CD4-positive, alpha-beta memory T cell (primary cell): ENCODE measurements at regions of chr1 and their contacts with region 1.

Region 1: GRCh38 chr1:110619412-110620249 is 13.5 kb upstream of the KCNA2 start:
- DNase-seq: peak; percentile 86 to 92 (median 91)
- H3K4me3 ChIP-seq: peak overlapping the region; percentile 60 to 77
- H3K4me3 Mint-ChIP-seq: peak overlapping the region; percentile 86 to 97 (median 91)
- H3K27ac ChIP-seq: peak overlapping the region; percentile 50
- H3K27ac Mint-ChIP-seq: peak overlapping the region; percentile 90 to 99 (median 97)
- H3K4me1 ChIP-seq: peaks cover 33% of the 10 kb centered on the region
- H3K4me1 Mint-ChIP-seq: peaks cover 32 to 50% (median 38%) of the 10 kb centered on the region in 4 donors
- H3K27me3 ChIP-seq: no peaks in the 10 kb centered on the region
- H3K27me3 Mint-ChIP-seq: no peaks in the 10 kb centered on the region

Region 2: DNA sequence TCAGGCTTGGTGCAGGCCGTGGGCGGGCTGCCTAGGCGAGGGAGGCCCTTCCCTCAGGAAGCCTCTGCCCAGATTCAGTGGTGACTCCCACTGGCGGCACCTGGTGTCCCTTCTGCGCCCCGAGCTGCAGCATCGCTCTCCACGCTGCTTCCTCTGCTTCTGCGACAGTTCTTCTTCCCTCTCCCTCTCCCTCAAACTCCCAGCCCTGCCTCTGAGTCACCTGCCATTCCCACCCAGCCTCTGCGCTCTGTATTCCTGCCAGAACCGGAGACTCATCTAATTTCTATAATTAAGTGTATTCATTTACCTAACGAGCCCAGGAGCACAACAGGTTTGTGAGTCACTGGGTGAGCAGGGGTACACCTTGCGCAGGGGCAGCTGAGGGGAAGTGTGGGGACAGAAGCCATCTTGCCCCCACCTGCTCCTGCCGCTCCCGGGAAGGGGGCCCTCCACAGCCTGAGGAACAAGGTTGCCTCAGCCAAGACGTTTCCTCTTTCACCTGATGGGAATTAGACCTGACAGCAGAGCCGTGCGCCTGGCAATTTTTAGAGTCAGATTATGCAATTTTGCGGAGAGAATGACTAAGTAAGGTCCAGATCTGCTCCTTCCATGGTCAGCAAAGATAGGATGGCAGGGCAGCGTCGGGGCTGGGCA is 390.2 kb before region 1 on chr1:
- CTCF ChIA-PET with region 1: no interaction called
- POLR2A ChIA-PET with region 1: no interaction called
- intact Hi-C with region 1: no loop called
- DNase-seq: no peak
- H3K4me3 ChIP-seq: no peak overlapping the region
- H3K4me3 Mint-ChIP-seq: no peak overlapping the region
- H3K27ac ChIP-seq: no peak overlapping the region
- H3K27ac Mint-ChIP-seq: peak overlapping the region in 1 of 7 donors; percentile 57
- H3K4me1 ChIP-seq: no peaks in the 10 kb centered on the region
- H3K4me1 Mint-ChIP-seq: peaks cover 0 to 3% (median 0%) of the 10 kb centered on the region in 4 donors
- H3K27me3 ChIP-seq: no peaks in the 10 kb centered on the region
- H3K27me3 Mint-ChIP-seq: no peaks in the 10 kb centered on the region

Region 3: GRCh38 chr1:110524311-110525251 is 95.0 kb before region 1 on chr1:
- CTCF ChIA-PET with region 1: interaction called, 6 read pairs
- POLR2A ChIA-PET with region 1: no interaction called
- intact Hi-C with region 1: loop called (anchors 1 kb)
- DNase-seq: peak in 4 of 5 donors; percentile 25 to 48 (median 44)
- H3K4me3 ChIP-seq: no peak overlapping the region
- H3K4me3 Mint-ChIP-seq: peak overlapping the region in 5 of 8 donors; percentile 14 to 61 (median 51)
- H3K27ac ChIP-seq: no peak overlapping the region
- H3K27ac Mint-ChIP-seq: no peak overlapping the region
- H3K4me1 ChIP-seq: no peaks in the 10 kb centered on the region
- H3K4me1 Mint-ChIP-seq: peaks cover 0 to 6% (median 2%) of the 10 kb centered on the region in 4 donors
- H3K27me3 ChIP-seq: peaks cover 5% of the 10 kb centered on the region
- H3K27me3 Mint-ChIP-seq: peaks cover 15 to 28% of the 10 kb centered on the region in 2 donors

Region 4: DNA sequence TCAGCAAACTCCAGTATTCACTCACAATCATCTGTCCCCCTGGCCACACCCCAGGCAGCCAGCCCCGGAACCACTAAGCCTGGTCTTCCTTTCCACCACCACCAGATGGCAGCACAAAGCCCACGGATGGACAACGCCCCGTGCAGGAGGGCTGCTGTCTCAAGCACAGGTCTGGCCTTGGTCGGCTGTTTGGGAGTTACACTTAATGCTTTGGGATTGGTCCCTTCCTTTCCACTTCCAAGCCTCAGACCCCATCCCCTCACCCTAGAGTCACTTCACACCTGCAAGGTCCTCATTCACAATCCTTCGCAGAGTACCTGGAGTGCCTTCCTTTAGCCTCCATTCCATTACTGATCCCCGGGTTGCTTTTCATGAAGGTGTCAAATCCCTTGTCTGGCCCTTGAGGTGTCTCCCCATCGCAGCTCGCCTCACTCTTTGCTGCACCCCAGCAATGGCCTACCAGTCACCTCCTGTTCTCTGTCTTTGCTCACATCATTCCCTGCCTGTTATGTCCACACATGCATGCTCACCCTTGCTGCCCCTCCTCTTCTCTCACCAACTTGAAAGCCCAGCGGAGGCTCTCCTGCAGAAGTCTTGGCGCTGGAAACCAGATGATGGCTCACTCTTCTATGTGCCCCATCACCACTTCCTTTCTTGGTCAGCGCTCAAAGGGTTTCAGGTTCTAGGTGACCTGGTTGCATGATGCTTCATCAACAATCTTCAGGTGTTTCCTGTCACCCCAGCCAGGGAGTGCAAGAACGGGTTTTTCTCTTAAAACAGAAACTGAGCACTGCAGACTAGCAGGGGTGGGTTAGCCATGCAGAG is 11.4 kb after region 1 on chr1:
- CTCF ChIA-PET with region 1: interaction called, 52 read pairs
- POLR2A ChIA-PET with region 1: interaction called, 48 read pairs
- intact Hi-C with region 1: loop called (anchors 1 kb)
- DNase-seq: peak; percentile 87 to 92 (median 88)
- H3K4me3 ChIP-seq: peak overlapping the region; percentile 25 to 46
- H3K4me3 Mint-ChIP-seq: no peak overlapping the region
- H3K27ac ChIP-seq: peak overlapping the region; percentile 72
- H3K27ac Mint-ChIP-seq: no peak overlapping the region
- H3K4me1 ChIP-seq: peaks cover 95% of the 10 kb centered on the region
- H3K4me1 Mint-ChIP-seq: peaks cover 32 to 57% (median 54%) of the 10 kb centered on the region in 4 donors
- H3K27me3 ChIP-seq: no peaks in the 10 kb centered on the region
- H3K27me3 Mint-ChIP-seq: no peaks in the 10 kb centered on the region

Region 5: DNA sequence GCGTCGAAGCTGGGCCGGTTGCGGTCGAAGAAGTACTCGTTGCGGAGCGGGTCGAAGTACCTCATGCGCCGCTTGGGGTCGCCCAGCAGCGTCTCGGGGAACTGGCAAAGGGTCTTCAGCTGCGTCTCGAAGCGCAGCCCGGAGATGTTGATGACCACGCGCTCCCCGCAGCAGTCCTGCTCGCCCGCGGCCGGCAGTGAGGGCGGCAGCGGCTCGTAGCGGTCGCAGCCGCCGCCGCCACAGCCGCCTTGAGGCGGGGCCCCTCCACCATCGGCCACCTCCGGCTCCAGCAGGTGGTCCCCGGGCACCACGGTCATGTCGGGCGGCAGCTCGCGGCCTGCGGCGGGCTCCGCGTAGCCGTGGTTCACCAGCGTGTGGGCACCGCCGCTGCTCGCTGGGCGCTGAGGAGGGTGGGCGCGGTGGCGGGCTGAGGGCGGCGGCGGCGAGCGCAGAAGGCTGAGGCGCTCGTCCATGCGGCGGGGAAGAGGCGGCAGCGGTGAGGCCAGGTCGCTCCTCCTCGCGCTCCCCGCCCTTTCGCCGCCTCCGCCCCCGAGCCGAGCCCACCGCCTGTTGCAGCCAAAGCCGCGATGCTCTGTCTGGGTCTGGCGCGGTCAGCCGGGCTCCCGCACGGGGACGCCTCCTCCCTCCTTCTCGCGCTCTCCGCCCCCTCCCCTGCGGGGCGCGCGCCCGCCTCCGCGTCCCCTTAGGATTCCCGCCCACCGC is 54.9 kb after region 1 on chr1 and contains the start of gene KCNA3:
- CTCF ChIA-PET with region 1: interaction called, 12 read pairs
- POLR2A ChIA-PET with region 1: interaction called, 104 read pairs
- intact Hi-C with region 1: loop called (anchors 1 kb)
- DNase-seq: peak; percentile 67 to 79 (median 69)
- H3K4me3 ChIP-seq: peak within 1 kb of the TSS; percentile 73 to 78
- H3K4me3 Mint-ChIP-seq: peak within 1 kb of the TSS; percentile 84 to 100 (median 100)
- H3K27ac ChIP-seq: peak within 1 kb of the TSS; percentile 91
- H3K27ac Mint-ChIP-seq: peak within 1 kb of the TSS; percentile 76 to 100 (median 99)
- H3K4me1 ChIP-seq: peaks cover 38% of the 10 kb centered on the region
- H3K4me1 Mint-ChIP-seq: peaks cover 28 to 79% (median 38%) of the 10 kb centered on the region in 4 donors
- H3K27me3 ChIP-seq: no peaks in the 10 kb centered on the region
- H3K27me3 Mint-ChIP-seq: no peaks in the 10 kb centered on the region
- total RNA-seq, gene KCNA3: 124 TPM

Region 6: GRCh38 chr1:110766025-110766647 is 146.5 kb after region 1 on chr1:
- CTCF ChIA-PET with region 1: interaction called, 273 read pairs
- POLR2A ChIA-PET with region 1: interaction called, 48 read pairs
- intact Hi-C with region 1: loop called (anchors 1 kb)
- DNase-seq: peak; percentile 59 to 71 (median 68)
- H3K4me3 ChIP-seq: no peak overlapping the region
- H3K4me3 Mint-ChIP-seq: no peak overlapping the region
- H3K27ac ChIP-seq: no peak overlapping the region
- H3K27ac Mint-ChIP-seq: peak overlapping the region in 1 of 7 donors; percentile 80
- H3K4me1 ChIP-seq: peaks cover 4% of the 10 kb centered on the region
- H3K4me1 Mint-ChIP-seq: peaks cover 0 to 9% (median 2%) of the 10 kb centered on the region in 4 donors
- H3K27me3 ChIP-seq: no peaks in the 10 kb centered on the region
- H3K27me3 Mint-ChIP-seq: peaks cover 12% of the 10 kb centered on the region in 2 donors

Region 7: GRCh38 chr1:110990536-110990935 is 370.9 kb after region 1 on chr1:
- CTCF ChIA-PET with region 1: interaction called, 9 read pairs
- POLR2A ChIA-PET with region 1: no interaction called
- intact Hi-C with region 1: loop called (anchors 1 kb)
- DNase-seq: no peak
- H3K4me3 ChIP-seq: no peak overlapping the region
- H3K4me3 Mint-ChIP-seq: no peak overlapping the region
- H3K27ac ChIP-seq: no peak overlapping the region
- H3K27ac Mint-ChIP-seq: no peak overlapping the region
- H3K4me1 ChIP-seq: no peaks in the 10 kb centered on the region
- H3K4me1 Mint-ChIP-seq: peaks cover 0 to 4% (median 2%) of the 10 kb centered on the region in 4 donors
- H3K27me3 ChIP-seq: no peaks in the 10 kb centered on the region
- H3K27me3 Mint-ChIP-seq: peaks cover 5 to 9% of the 10 kb centered on the region in 2 donors